SK-N-SH (cell line): ENCODE measurements at regions of chr5 and their contacts with region 1.

Region 1: DNA sequence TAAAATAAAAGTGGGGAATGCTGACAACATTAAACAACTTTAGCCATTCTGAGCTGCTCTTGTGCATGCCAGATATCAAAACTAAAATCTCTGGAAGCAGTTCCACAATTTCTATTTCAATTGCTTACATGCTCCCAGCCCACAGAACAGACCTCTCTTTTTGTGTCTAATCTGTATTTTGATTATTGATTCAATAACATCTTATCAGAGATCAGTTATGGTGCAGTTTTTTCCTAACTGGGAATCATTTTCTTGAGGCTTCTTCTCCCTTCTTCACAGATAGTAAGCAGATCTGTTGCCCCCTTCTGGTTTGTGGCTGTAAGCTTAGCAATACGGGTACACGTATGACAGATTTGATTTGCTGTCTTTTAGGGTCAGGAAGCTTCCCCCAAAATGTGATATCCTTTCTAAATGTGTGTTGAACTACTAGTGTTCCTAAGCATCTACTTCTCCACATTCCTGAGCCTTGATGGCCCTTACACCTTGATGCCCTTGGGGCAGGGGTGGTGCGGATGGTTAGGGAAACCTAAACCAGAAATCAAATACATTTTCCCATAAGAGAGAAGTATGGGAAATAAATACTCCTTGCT is 39.4 kb downstream of the MRPS27 start:
- DNase-seq: peak; percentile 37
- H3K4me3 ChIP-seq: no peak overlapping the region; a peak in 1 of 4 replicates
- H3K27ac ChIP-seq: peak overlapping the region; percentile 88 to 90
- H3K4me1 ChIP-seq: peaks cover 33% of the 10 kb centered on the region in 2 experiments
- H3K27me3 ChIP-seq: no peaks in the 10 kb centered on the region
- CTCF ChIP-seq: peak; percentile 75
- EP300 ChIP-seq: peak in 1 of 2 experiments; percentile 81; a peak in 2 of 4 replicates
- RAD21 ChIP-seq: peak; percentile 54

Region 2: DNA sequence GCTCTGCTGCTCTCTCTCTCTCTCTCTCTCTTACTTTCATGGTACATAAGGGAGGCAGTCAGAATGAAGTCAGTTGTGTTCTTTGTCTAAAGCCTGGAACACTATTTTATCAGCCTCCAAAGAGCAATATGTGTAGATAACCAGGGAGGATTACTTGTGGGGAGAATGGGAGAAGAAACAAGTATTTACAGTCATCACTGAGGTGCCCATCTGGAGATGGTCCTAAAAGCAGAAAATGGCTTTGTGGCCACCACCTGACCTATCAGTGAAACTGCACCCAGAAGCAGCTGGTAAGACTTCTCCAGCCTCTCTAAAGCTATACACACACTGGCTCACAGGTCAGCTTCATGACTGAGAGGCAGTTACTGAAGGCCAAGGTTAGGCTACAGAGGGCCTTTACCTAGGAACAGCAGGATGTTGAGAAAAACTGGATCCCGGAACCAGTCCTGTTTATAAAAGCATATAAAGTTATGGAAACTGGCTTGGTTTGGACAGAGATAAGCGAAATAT is 35.8 kb before region 1 on chr5:
- CTCF ChIA-PET with region 1: interaction called, 14 read pairs
- POLR2A ChIA-PET with region 1: no interaction called
- DNase-seq: peak; percentile 43
- H3K4me3 ChIP-seq: no peak overlapping the region
- H3K27ac ChIP-seq: peak overlapping the region; percentile 91 to 99
- H3K4me1 ChIP-seq: peaks cover 16 to 50% of the 10 kb centered on the region in 2 experiments
- H3K27me3 ChIP-seq: no peaks in the 10 kb centered on the region
- CTCF ChIP-seq: peak; percentile 62
- EP300 ChIP-seq: no peak
- RAD21 ChIP-seq: peak; percentile 81

Region 3: DNA sequence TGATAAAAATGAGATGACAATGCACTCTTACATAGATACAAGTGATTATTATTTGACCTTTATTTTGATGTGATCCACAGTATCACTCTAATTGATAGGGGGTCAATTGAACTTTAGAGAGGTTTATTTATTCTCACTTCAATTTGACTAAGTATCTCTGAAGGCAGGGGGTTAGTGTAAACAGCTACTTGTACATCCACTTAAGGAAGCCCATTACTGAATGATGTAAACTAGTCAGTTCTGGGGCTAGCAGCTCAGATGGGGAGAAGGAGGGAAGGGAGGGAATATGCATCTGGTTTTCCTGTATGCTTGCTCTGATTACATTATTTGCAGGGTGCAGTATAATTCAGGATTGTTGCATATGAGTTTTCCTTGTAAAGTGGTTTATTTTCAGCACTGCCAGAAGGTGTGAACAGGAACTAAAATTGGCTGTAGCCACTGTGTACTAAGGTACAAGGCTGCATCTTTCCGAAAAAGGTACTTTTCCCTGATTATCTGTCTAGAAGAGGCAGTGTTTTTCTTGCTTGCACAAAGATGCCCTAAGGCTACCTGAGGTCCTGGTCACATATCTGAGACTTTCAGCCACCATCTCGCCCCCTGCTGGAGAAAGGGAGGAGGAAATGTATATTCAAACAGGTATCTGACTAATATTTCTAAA is 11.8 kb before region 1 on chr5:
- CTCF ChIA-PET with region 1: interaction called, 13 read pairs
- POLR2A ChIA-PET with region 1: no interaction called
- DNase-seq: peak; percentile 36
- H3K4me3 ChIP-seq: no peak overlapping the region; a peak in 1 of 4 replicates
- H3K27ac ChIP-seq: no peak overlapping the region; a peak in 2 of 4 replicates
- H3K4me1 ChIP-seq: peaks cover 5 to 16% of the 10 kb centered on the region in 2 experiments; a peak in 3 of 4 replicates
- H3K27me3 ChIP-seq: no peaks in the 10 kb centered on the region
- CTCF ChIP-seq: peak; percentile 73
- EP300 ChIP-seq: no peak
- RAD21 ChIP-seq: peak; percentile 58

Region 4: DNA sequence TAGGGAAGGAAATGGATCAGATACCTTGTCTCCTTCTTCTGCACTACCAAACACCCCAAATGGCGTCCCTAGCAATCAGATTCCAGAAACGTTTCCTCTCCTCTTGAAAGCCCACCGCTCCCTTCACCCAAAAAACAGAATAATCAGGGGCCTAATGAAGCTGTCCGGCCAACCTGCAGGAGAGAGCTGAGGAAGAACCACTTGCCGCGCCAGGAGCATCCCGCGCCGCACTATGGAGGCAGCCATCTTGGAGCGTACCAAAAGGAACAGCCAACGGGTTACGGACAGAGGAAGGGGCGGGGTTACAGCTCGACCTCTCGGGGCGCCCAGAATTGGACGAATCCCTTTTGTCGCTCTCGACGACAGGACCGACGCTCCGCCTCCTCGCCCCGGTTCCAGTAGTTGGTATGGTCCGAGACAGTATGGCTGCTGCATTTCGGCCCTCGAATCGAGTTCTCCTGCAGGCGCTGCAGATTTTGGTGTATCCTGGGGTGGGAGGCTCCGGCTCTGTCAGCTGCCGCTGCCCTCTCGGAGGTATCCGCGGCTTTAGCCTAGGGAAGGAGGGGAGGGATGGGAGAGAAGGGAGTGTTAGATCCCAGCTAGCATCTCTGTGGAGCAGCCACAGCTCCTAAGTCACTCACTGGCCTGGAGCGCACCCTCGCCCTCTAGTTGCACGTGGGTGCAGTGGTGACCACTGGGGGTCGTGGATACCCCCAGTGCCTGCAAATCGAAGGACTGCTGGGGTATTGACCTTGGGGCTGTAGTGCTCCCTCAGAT is 39.5 kb after region 1 on chr5 and contains the starts of genes MRPS27 and PTCD2:
- CTCF ChIA-PET with region 1: no interaction called
- POLR2A ChIA-PET with region 1: no interaction called
- DNase-seq: peak; percentile 97
- H3K4me3 ChIP-seq: peak within 1 kb of the TSS; percentile 77 to 84
- H3K27ac ChIP-seq: peak within 1 kb of the TSS; percentile 66 to 90
- H3K4me1 ChIP-seq: peaks cover 0 to 4% of the 10 kb centered on the region in 2 experiments; a peak in 3 of 4 replicates
- H3K27me3 ChIP-seq: no peaks in the 10 kb centered on the region
- CTCF ChIP-seq: peak; percentile 46
- EP300 ChIP-seq: no peak
- RAD21 ChIP-seq: no peak
- polyA plus RNA-seq, gene MRPS27: 37.5 and 48.2 TPM in 2 replicates
- polyA plus RNA-seq, gene PTCD2: 6.7 and 8.6 TPM in 2 replicates